CD8-positive, alpha-beta memory T cell (primary cell): ENCODE measurements at regions of chr17 and their contacts with region 1.

Region 1: DNA sequence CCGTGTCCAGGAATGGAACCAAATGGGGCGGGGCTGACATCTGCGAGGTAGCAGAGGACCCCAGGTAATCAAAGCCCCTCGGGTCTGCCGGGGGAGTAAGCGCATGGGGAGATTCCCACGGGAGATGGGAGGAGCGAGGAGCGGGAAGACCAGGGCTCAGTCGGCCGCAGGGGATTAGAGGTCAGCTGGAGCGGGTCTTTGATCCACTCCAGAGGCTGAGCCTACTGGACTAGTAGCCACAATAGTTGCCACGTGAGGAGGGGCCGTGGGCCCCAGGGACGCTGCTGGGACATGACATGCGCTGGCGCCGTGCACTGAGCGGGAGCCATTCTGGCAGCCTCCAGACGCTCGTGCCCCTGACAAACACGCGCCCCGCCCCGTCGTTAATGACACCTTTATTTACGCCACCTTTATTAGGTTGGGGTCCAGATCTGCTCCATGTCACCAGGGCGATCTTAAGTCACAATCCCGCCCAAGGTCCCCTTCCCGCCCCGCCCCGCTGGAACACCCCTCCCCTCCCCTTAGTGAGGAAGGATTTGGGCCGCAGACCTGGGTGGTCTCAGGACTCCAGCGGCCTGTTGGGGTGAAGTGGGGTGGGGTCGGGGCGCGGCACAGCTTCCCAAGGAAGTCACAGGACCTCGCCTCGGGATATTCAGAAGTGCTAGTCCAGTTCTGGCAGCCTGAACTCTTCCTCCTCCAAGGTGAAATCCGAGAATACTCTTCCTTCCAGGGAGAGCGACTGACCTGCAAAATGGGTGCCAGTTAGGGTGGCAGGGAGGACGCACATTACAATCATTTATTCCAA is 15.0 kb downstream of the PPY start:
- DNase-seq: peak in 1 of 5 donors; percentile 50
- H3K4me3 ChIP-seq: peak overlapping the region; percentile 67
- H3K4me3 Mint-ChIP-seq: peak overlapping the region; percentile 81 to 94 (median 89)
- H3K27ac ChIP-seq: no peak overlapping the region
- H3K27ac Mint-ChIP-seq: peak overlapping the region; percentile 43 to 94 (median 80)
- H3K4me1 ChIP-seq: peaks cover 23% of the 10 kb centered on the region
- H3K4me1 Mint-ChIP-seq: peaks cover 17 to 20% (median 19%) of the 10 kb centered on the region in 3 donors
- H3K27me3 ChIP-seq: no peaks in the 10 kb centered on the region
- H3K27me3 Mint-ChIP-seq: peaks cover 12 to 13% of the 10 kb centered on the region in 2 donors

Region 2: GRCh38 chr17:43907425-43907981 is 19.8 kb before region 1 on chr17 and contains the start of gene MPP2:
- CTCF ChIA-PET with region 1: interaction called, 26 read pairs
- POLR2A ChIA-PET with region 1: interaction called, 16 read pairs
- DNase-seq: peak; percentile 22 to 77 (median 46)
- H3K4me3 ChIP-seq: peak within 1 kb of the TSS; percentile 89
- H3K4me3 Mint-ChIP-seq: peak within 1 kb of the TSS; percentile 82 to 93 (median 89)
- H3K27ac ChIP-seq: peak within 1 kb of the TSS; percentile 16
- H3K27ac Mint-ChIP-seq: peak within 1 kb of the TSS; percentile 8 to 97 (median 86)
- H3K4me1 ChIP-seq: peaks cover 21% of the 10 kb centered on the region
- H3K4me1 Mint-ChIP-seq: peaks cover 16 to 27% (median 17%) of the 10 kb centered on the region in 3 donors
- H3K27me3 ChIP-seq: peaks cover 14% of the 10 kb centered on the region
- H3K27me3 Mint-ChIP-seq: peaks cover 35 to 36% of the 10 kb centered on the region in 2 donors
- total RNA-seq, gene MPP2: 0.90 to 1.1 TPM

Region 3: DNA sequence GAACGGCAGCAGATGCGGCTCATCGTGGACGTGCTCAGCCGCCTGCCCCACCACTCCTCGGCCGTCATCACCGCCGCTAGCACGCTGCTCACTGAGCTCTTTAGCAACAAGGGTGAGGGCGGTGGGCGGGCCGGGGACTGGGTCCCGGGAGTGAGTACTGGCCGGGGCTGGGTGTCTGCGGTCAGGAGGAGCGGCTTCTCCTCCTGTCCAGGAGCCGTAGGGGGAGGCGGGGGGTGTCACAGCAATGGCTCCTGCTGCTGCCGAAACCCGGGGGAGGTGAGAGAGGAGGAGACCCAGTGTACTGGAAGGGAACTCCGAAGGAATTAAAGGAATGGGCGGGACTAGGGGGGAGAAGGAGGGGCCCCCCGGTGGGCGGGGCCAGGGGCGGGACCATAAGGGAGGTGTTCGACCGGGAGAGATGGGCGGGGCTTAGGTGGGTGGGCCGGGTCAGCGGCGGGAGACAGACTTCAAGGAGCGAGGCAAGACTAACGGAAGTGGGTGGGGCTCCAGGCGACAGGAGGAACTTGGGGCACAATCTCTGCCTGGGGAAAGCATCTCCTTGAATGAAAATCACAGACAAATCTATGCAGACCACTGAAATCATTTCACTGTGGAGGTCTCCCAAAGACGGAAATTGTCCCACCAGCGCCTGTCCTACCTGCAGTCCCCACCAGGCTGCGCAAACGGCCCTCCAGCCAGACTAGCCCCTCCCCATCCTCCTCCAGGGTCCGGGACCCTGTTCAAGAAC is 79.5 kb after region 1 on chr17:
- CTCF ChIA-PET with region 1: no interaction called
- POLR2A ChIA-PET with region 1: no interaction called
- DNase-seq: peak; percentile 84 to 99 (median 98)
- H3K4me3 ChIP-seq: peak overlapping the region; percentile 90
- H3K4me3 Mint-ChIP-seq: peak overlapping the region; percentile 88 to 97 (median 91)
- H3K27ac ChIP-seq: peak overlapping the region; percentile 16
- H3K27ac Mint-ChIP-seq: peak overlapping the region; percentile 72 to 95 (median 84)
- H3K4me1 ChIP-seq: peaks cover 28% of the 10 kb centered on the region
- H3K4me1 Mint-ChIP-seq: peaks cover 19 to 33% (median 20%) of the 10 kb centered on the region in 3 donors
- H3K27me3 ChIP-seq: no peaks in the 10 kb centered on the region
- H3K27me3 Mint-ChIP-seq: peaks cover 4 to 8% of the 10 kb centered on the region in 2 donors